Activated naive CD4-positive, alpha-beta T cell treated with anti-CD3 and anti-CD28 coated beads, Interleukin-2, amount 10 ng/mL, durations not matched to agents 7 days and 5 days (primary cell): ENCODE measurements at regions of chr2 and their contacts with region 1.

Region 1: GRCh38 chr2:134411828-134412638 is 158.2 kb downstream of the MGAT5 start:
- DNase-seq: peak; percentile 84
- H3K4me3 Mint-ChIP-seq: no peak overlapping the region
- H3K27ac Mint-ChIP-seq: no peak overlapping the region
- H3K4me1 Mint-ChIP-seq: peaks cover 33% of the 10 kb centered on the region
- H3K27me3 Mint-ChIP-seq: no peaks in the 10 kb centered on the region

Region 2: GRCh38 chr2:134118279-134119116 is 293.5 kb before region 1 on chr2:
- CTCF ChIA-PET with region 1: interaction called, 174 read pairs
- DNase-seq: peak; percentile 92
- H3K4me3 Mint-ChIP-seq: peak overlapping the region; percentile 96
- H3K27ac Mint-ChIP-seq: no peak overlapping the region
- H3K4me1 Mint-ChIP-seq: peaks cover 40% of the 10 kb centered on the region
- H3K27me3 Mint-ChIP-seq: peaks cover 21% of the 10 kb centered on the region

Region 3: GRCh38 chr2:134245340-134245984 is 166.6 kb before region 1 on chr2:
- CTCF ChIA-PET with region 1: interaction called, 50 read pairs
- DNase-seq: peak; percentile 86
- H3K4me3 Mint-ChIP-seq: no peak overlapping the region
- H3K27ac Mint-ChIP-seq: peak overlapping the region; percentile 33
- H3K4me1 Mint-ChIP-seq: peaks cover 65% of the 10 kb centered on the region
- H3K27me3 Mint-ChIP-seq: no peaks in the 10 kb centered on the region

Region 4: GRCh38 chr2:134398300-134398699 is 13.7 kb before region 1 on chr2:
- CTCF ChIA-PET with region 1: interaction called, 13 read pairs
- DNase-seq: no peak
- H3K4me3 Mint-ChIP-seq: no peak overlapping the region
- H3K27ac Mint-ChIP-seq: no peak overlapping the region
- H3K4me1 Mint-ChIP-seq: no peaks in the 10 kb centered on the region
- H3K27me3 Mint-ChIP-seq: no peaks in the 10 kb centered on the region

Region 5: DNA sequence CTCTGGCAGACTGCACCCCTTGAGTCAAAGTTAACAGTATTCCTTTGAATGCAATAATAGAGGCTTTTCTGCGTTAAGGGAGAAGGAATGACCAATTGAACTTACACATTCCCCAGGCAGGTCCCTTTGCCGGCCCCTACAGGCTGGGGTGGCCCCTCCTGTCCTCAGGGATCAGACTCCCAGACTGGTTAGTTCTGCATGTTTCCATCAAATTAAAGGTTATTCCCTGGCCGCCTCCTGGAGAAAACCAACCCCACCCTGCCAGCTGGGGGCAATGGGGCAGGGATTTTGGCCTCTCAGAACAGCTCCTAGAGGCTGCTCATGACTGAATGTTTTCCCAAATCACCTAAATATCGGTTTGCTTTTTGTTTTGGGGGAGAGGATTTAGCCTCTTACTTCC is 41.4 kb after region 1 on chr2:
- CTCF ChIA-PET with region 1: interaction called, 10 read pairs
- DNase-seq: no peak
- H3K4me3 Mint-ChIP-seq: no peak overlapping the region
- H3K27ac Mint-ChIP-seq: no peak overlapping the region
- H3K4me1 Mint-ChIP-seq: no peaks in the 10 kb centered on the region
- H3K27me3 Mint-ChIP-seq: no peaks in the 10 kb centered on the region

Region 6: GRCh38 chr2:134623796-134624195 is 211.8 kb after region 1 on chr2:
- CTCF ChIA-PET with region 1: no interaction called
- DNase-seq: no peak
- H3K4me3 Mint-ChIP-seq: no peak overlapping the region
- H3K27ac Mint-ChIP-seq: no peak overlapping the region
- H3K4me1 Mint-ChIP-seq: no peaks in the 10 kb centered on the region
- H3K27me3 Mint-ChIP-seq: no peaks in the 10 kb centered on the region